Mammary epithelial cell (primary cell): ENCODE measurements at regions of chr20 and their contacts with region 1.

Region 1: DNA sequence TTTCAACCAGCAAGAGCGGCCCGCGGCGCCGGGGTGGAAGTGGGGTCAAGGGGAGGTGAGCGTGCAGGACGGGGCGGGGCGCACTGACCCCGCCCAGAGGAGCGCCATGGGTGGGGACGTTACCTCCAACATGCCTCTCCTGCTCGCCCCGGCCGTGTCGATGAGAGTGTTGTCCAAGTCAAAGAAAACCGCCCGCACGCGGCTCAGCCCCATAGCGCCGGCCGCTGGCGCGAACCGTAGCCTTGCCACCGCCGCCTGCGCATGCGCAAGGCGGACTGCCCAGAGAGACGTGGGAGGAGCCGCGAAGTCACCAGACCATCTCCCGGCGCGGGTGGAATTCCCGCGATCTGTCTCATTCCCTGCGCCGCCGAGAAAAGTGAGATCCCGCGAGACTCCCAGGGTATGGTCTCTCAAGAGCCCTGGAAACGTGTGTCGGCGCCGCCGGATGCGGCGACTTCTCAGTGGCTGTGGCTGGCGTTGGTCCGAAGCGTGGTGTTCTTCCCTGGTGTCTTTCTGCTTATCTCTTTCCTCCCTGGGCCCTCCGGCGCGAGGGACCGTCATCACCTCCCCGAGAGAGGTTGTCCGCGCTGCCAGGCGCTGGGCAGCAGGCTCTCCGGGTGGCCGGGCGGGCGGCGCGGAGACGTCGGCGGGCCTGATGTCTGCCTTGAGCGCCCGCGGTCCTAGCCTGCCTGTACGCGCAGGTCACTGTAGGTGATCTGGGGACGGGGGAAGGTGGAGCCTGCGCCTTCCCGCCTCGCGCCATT is at the start of gene NANP:
- DNase-seq: peak; percentile 98
- H3K4me3 ChIP-seq: peak within 1 kb of the TSS; percentile 53 to 94 (median 87)
- H3K27ac ChIP-seq: peak within 1 kb of the TSS; percentile 83
- H3K4me1 ChIP-seq: peaks cover 18% of the 10 kb centered on the region
- H3K27me3 ChIP-seq: no peaks in the 10 kb centered on the region
- CTCF ChIP-seq: peak in 1 of 2 donors; percentile 25
- total RNA-seq, gene NANP: 7.5 TPM

Region 2: GRCh38 chr20:25739615-25740320 is 115.8 kb after region 1 on chr20:
- CTCF ChIA-PET with region 1: no interaction called
- dilution Hi-C with region 1: no loop called
- in situ Hi-C with region 1: no loop called
- intact Hi-C with region 1: loop called (anchors 5 kb)
- DNase-seq: peak; percentile 46
- H3K4me3 ChIP-seq: no peak overlapping the region
- H3K27ac ChIP-seq: no peak overlapping the region
- H3K4me1 ChIP-seq: peaks cover 8% of the 10 kb centered on the region
- H3K27me3 ChIP-seq: no peaks in the 10 kb centered on the region
- CTCF ChIP-seq: no peak